Activated B cell treated with CpG ODN at 0.5 μM for 24 hours (primary cell): ENCODE measurements at regions of chr10 and their contacts with region 1.

Region 1: GRCh38 chr10:42638055-42638820 is at the start of gene ZNF33B:
- DNase-seq: peak; percentile 88
- ATAC-seq: peak; percentile 96
- H3K4me3 Mint-ChIP-seq: peak within 1 kb of the TSS; percentile 96
- H3K27ac Mint-ChIP-seq: peak within 1 kb of the TSS; percentile 96
- H3K4me1 Mint-ChIP-seq: peaks cover 46% of the 10 kb centered on the region
- H3K27me3 Mint-ChIP-seq: no peaks in the 10 kb centered on the region
- CTCF ChIP-seq: no peak
- total RNA-seq, gene ZNF33B: 31.0 and 34.0 TPM in 2 replicates

Region 2: GRCh38 chr10:42367532-42368230 is 270.6 kb before region 1 on chr10:
- CTCF ChIA-PET with region 1: no interaction called
- POLR2A ChIA-PET with region 1: no interaction called
- intact Hi-C with region 1: loop called (anchors 5 kb)
- DNase-seq: peak; percentile 41
- ATAC-seq: peak; percentile 99
- H3K4me3 Mint-ChIP-seq: peak overlapping the region; percentile 87
- H3K27ac Mint-ChIP-seq: peak overlapping the region; percentile 61
- H3K4me1 Mint-ChIP-seq: peaks cover 4% of the 10 kb centered on the region
- H3K27me3 Mint-ChIP-seq: no peaks in the 10 kb centered on the region
- CTCF ChIP-seq: no peak

Region 3: GRCh38 chr10:42552493-42553407 is 85.5 kb before region 1 on chr10:
- CTCF ChIA-PET with region 1: no interaction called
- POLR2A ChIA-PET with region 1: interaction called, 3 read pairs
- intact Hi-C with region 1: loop called (anchors 1 kb)
- DNase-seq: peak; percentile 85
- ATAC-seq: peak; percentile 97
- H3K4me3 Mint-ChIP-seq: peak overlapping the region; percentile 96
- H3K27ac Mint-ChIP-seq: peak overlapping the region; percentile 89
- H3K4me1 Mint-ChIP-seq: peaks cover 35% of the 10 kb centered on the region
- H3K27me3 Mint-ChIP-seq: no peaks in the 10 kb centered on the region
- CTCF ChIP-seq: no peak

Region 4: DNA sequence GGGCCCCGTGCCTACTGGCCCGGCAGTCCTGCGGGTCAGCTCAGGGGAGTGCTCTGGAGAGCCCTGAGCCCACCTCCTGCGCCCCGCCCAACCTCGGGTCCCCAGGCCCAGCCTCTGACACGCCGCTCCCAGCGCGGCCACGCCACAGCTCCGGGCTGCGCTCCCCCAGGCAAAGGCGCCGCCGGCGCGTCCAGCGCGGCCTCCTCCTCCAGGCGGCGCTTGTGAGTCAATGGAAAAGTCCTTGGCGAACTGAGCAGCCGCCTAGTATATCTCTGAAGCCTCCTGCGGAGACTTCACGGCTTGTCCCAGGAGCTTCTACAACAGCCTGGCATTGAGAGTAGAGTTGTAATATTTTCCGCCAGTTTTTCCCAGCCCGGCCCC is 114.9 kb after region 1 on chr10:
- CTCF ChIA-PET with region 1: no interaction called
- POLR2A ChIA-PET with region 1: no interaction called
- intact Hi-C with region 1: loop called (anchors 10 kb)
- DNase-seq: peak; percentile 46
- ATAC-seq: peak; percentile 45
- H3K4me3 Mint-ChIP-seq: peak overlapping the region; percentile 83
- H3K27ac Mint-ChIP-seq: no peak overlapping the region
- H3K4me1 Mint-ChIP-seq: peaks cover 14% of the 10 kb centered on the region
- H3K27me3 Mint-ChIP-seq: peaks cover 56% of the 10 kb centered on the region
- CTCF ChIP-seq: no peak

Region 5: DNA sequence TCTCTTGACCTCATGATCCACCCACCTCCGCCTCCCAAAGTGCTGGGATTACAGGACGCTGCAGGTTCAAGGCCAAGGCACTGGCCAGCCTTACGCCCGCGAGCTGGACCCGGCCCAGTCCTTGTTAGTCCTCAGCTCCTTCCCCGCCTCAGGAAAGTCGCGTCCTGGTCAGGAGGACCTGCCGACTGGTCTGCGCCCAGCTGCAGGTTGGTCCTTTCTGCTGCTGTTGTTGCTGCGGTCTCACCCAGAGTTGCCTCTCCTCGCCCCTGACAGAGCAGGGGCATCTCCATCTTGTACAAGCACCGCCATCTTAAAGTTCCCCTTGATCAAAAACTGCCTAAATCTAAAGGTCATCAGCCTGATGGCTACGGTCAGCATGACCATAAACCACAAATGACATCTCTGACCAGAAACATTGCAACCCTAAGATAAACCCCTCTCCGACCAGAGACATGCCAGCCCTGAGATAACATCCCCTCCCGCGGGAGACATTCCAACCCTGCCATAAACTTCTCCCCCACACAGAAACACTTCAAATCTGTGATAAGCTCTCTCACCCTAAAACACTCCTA is 130.4 kb after region 1 on chr10:
- CTCF ChIA-PET with region 1: no interaction called
- POLR2A ChIA-PET with region 1: no interaction called
- intact Hi-C with region 1: no loop called
- DNase-seq: no peak
- ATAC-seq: no peak
- H3K4me3 Mint-ChIP-seq: no peak overlapping the region
- H3K27ac Mint-ChIP-seq: no peak overlapping the region
- H3K4me1 Mint-ChIP-seq: no peaks in the 10 kb centered on the region
- H3K27me3 Mint-ChIP-seq: peaks cover 19% of the 10 kb centered on the region
- CTCF ChIP-seq: no peak

Region 6: GRCh38 chr10:43105102-43105785 is 467.0 kb after region 1 on chr10:
- CTCF ChIA-PET with region 1: no interaction called
- POLR2A ChIA-PET with region 1: no interaction called
- intact Hi-C with region 1: loop called (anchors 10 kb)
- DNase-seq: peak; percentile 82
- ATAC-seq: peak; percentile 95
- H3K4me3 Mint-ChIP-seq: peak overlapping the region; percentile 83
- H3K27ac Mint-ChIP-seq: no peak overlapping the region
- H3K4me1 Mint-ChIP-seq: peaks cover 16% of the 10 kb centered on the region
- H3K27me3 Mint-ChIP-seq: peaks cover 22% of the 10 kb centered on the region
- CTCF ChIP-seq: peak; percentile 97

Region 7: DNA sequence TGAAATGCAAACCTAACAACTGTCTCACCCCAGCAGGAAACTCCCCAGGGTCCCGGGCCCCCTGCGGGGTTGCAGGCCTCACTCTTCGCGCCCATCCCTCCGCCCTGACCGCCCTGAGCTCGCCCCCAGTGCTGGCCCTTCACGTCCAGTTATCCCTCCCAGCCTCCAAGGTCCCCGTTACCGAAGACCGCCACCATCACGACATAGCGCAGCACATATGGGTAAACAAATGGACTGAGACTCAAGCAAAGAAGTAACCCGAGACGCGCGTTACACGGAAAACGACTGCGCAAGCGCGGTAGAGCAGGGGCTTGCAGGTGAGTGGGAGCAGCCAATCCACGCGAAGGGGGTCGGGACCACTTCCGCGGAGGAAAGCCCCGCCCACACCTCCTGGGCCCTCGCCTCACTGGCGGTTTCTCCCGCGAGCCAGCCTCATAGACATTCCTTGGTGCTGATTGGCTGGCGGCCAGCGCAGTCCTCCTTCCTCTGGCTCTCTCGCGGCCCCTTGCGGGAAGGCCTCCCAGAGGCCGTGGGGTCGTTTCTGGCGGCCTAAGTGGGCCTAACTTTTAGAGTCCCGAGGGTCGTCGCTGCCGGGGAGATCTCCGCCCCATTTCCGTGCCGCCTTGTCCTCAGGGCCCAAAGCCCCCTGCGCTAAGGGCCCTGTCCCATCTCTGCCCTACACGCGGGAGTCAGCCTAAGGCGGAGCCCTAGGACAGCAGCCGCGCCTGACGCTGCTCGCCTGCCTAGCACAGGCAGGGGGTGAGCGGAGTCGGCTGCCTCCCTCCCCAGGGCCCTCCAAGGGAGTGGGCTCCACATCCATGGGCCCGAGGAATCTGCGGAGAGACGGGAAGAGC is 724.0 kb after region 1 on chr10:
- CTCF ChIA-PET with region 1: no interaction called
- POLR2A ChIA-PET with region 1: no interaction called
- intact Hi-C with region 1: loop called (anchors 1 kb)
- DNase-seq: peak; percentile 86
- ATAC-seq: peak; percentile 98
- H3K4me3 Mint-ChIP-seq: peak overlapping the region; percentile 97
- H3K27ac Mint-ChIP-seq: peak overlapping the region; percentile 93
- H3K4me1 Mint-ChIP-seq: peaks cover 23% of the 10 kb centered on the region
- H3K27me3 Mint-ChIP-seq: no peaks in the 10 kb centered on the region
- CTCF ChIP-seq: no peak